Activated CD8-positive, alpha-beta T cell treated with anti-CD3 and anti-CD28 coated beads for 36 hours (primary cell): ENCODE measurements at regions of chr19 and their contacts with region 1.

Region 1: DNA sequence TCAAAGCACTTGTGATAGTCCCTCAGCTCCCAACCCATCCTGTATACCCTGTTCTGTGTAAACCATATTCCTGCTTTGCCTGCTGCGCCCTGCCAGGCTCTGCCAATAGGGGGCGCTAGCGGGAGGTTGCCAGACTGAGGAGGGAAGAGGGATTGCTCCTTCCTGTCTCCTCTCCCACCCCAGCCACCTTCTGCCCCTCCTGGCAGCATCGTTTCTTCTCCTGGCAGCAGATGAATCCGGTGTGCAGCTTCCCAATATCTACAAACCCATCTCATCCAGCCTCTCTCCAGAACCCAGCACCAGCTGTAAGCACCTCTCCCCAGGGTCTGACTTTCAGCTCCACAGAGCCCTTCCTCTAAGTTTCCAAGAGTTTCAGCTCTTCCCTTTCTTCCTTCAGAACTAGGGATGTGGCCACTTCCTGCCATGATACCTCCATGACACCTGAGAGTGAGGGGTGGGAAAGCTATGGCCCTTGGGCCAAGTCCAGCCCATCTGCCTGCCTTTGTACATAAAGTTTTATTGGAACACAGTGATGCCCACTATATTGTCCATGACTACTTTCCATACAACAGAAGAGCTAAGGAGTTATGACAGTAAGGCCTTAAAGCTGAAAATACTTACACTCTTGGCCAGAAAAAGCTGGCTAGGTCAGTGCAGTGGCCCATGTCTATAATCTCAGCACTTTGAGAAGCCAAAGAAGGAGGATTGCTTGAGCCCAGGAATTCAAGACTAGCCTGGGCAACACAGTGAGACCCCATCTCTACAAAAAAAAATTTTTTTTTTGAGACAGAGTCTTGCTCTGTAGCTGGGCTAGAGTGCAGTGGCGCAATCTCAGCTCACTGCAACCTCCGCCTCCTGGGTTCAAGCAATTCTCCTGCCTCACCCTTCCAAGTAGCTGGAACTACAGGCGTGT is 34.5 kb upstream of the ATP1A3 start:
- DNase-seq: peak; percentile 50
- ATAC-seq: no peak
- H3K4me3 Mint-ChIP-seq: no peak overlapping the region
- H3K27ac Mint-ChIP-seq: no peak overlapping the region
- H3K4me1 Mint-ChIP-seq: no peaks in the 10 kb centered on the region
- H3K27me3 Mint-ChIP-seq: peaks cover 4% of the 10 kb centered on the region
- CTCF ChIP-seq: peak; percentile 80

Region 2: GRCh38 chr19:42010245-42011126 is 18.1 kb before region 1 on chr19:
- CTCF ChIA-PET with region 1: interaction called, 11 read pairs
- POLR2A ChIA-PET with region 1: no interaction called
- intact Hi-C with region 1: no loop called
- DNase-seq: no peak
- ATAC-seq: no peak
- H3K4me3 Mint-ChIP-seq: no peak overlapping the region
- H3K27ac Mint-ChIP-seq: peak overlapping the region; percentile 29
- H3K4me1 Mint-ChIP-seq: peaks cover 4% of the 10 kb centered on the region
- H3K27me3 Mint-ChIP-seq: no peaks in the 10 kb centered on the region
- CTCF ChIP-seq: no peak

Region 3: GRCh38 chr19:42038666-42039065 is 10.1 kb after region 1 on chr19:
- CTCF ChIA-PET with region 1: interaction called, 13 read pairs
- POLR2A ChIA-PET with region 1: no interaction called
- intact Hi-C with region 1: no loop called
- DNase-seq: no peak
- ATAC-seq: no peak
- H3K4me3 Mint-ChIP-seq: no peak overlapping the region
- H3K27ac Mint-ChIP-seq: no peak overlapping the region
- H3K4me1 Mint-ChIP-seq: peaks cover 3% of the 10 kb centered on the region
- H3K27me3 Mint-ChIP-seq: no peaks in the 10 kb centered on the region
- CTCF ChIP-seq: no peak